ENCODE measurements at regions of chr10 and their contacts with region 1.

Region 1: GRCh38 chr10:124388823-124389612 is 29.7 kb downstream of the OAT start:
- DNase-seq: peak; percentile 82 to 93 (median 91)
- H3K4me3 ChIP-seq: peak overlapping the region in 2 of 4 donors; percentile 14 to 50
- H3K27ac ChIP-seq: peak overlapping the region in 1 of 5 donors; percentile 30
- H3K4me1 ChIP-seq: peaks cover 5 to 8% of the 10 kb centered on the region in 2 donors
- H3K27me3 ChIP-seq: no peaks in the 10 kb centered on the region
- CTCF ChIP-seq: peak; percentile 71 to 98 (median 88)
- POLR2A ChIP-seq: no peak

Region 2: DNA sequence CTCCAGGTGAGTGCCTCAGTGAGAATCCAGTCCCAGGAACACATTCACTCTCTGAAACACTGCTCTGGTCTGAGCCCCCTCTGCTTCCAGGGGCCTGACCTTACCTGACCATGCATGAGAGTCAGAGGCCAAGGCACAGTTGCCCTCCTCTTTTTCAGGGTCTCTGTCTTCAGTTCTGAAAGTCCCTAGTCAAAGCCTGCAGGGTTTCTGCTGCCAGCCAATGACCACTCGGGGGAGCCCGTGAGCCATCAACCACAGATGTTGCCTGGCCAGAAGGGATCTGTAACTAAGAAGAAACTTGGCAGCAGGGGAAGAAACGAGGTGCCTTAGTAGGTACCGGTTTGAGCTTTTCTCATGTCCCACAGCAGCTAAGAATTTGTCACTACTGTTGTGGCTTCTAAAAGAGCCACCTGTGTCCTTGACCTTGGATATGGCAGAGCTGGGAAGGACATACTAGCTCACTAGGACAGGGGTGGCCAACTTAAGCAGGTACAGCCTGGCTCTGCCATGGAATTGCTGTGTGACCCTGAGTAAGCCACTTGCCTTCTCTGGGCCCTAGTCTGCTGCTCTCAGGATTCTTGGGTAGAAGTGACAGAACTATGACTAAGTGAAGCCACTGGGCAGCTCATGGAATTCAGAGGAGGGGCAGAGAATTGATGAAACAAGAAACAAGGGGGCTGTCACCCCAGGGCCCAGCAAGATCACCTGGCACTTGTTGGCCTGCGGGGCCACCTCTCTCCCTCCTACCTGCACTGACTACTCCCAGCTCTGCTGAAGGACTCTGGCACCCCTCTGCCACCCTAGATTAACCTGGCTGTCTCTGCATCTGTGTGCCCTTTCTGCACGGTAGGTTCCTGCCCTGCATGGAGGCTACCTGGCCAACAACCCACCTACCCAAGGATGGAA is 806.7 kb before region 1 on chr10:
- intact Hi-C with region 1: loop called in 1 of 2 experiments (anchors 10 kb)
- DNase-seq: peak; percentile 75 to 91 (median 83)
- H3K4me3 ChIP-seq: no peak overlapping the region
- H3K27ac ChIP-seq: no peak overlapping the region
- H3K4me1 ChIP-seq: peaks cover 0 to 5% of the 10 kb centered on the region in 2 donors
- H3K27me3 ChIP-seq: peaks cover 22% of the 10 kb centered on the region
- CTCF ChIP-seq: peak; percentile 61 to 84 (median 75)
- POLR2A ChIP-seq: no peak

Region 3: DNA sequence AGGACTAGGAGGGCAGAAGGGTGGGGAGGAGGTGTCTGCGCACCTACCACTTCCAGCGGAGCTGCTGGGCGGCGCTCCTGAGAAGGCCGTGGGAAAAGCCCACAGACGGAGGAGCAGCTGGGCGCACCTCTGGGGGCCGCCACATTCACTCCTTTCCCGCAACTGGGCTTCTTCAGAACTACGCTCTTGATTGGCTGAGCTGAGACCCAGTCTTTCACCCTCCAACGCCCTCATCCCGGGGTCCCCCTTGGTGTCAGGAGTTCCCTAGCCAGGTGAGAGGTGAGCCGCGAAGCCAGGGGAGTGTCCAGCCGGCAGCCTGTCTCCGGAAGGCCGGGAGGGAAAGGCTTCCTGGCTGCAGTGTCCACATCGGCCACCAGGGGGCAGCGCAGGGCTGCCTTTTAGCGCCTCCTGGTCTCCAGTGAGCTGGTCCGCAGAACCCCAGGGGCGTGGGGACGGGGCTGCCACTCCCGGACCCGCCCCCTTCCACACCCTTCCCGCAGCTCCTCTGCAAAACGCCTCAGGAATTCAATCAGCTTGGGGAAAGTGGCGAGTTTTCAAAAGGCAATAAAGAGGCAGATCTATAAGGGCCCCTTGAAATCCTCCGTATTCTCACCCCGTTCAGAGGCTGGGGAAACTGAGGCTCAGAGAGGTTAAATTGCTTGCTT is 394.5 kb before region 1 on chr10:
- intact Hi-C with region 1: loop called (anchors 2 kb)
- DNase-seq: peak; percentile 76 to 93 (median 86)
- H3K4me3 ChIP-seq: peak overlapping the region in 1 of 4 donors; percentile 18
- H3K27ac ChIP-seq: peak overlapping the region in 1 of 5 donors; percentile 69
- H3K4me1 ChIP-seq: peaks cover 7 to 27% of the 10 kb centered on the region in 2 donors
- H3K27me3 ChIP-seq: peaks cover 45% of the 10 kb centered on the region
- CTCF ChIP-seq: peak; percentile 95 to 99 (median 99)
- POLR2A ChIP-seq: no peak

Region 4: DNA sequence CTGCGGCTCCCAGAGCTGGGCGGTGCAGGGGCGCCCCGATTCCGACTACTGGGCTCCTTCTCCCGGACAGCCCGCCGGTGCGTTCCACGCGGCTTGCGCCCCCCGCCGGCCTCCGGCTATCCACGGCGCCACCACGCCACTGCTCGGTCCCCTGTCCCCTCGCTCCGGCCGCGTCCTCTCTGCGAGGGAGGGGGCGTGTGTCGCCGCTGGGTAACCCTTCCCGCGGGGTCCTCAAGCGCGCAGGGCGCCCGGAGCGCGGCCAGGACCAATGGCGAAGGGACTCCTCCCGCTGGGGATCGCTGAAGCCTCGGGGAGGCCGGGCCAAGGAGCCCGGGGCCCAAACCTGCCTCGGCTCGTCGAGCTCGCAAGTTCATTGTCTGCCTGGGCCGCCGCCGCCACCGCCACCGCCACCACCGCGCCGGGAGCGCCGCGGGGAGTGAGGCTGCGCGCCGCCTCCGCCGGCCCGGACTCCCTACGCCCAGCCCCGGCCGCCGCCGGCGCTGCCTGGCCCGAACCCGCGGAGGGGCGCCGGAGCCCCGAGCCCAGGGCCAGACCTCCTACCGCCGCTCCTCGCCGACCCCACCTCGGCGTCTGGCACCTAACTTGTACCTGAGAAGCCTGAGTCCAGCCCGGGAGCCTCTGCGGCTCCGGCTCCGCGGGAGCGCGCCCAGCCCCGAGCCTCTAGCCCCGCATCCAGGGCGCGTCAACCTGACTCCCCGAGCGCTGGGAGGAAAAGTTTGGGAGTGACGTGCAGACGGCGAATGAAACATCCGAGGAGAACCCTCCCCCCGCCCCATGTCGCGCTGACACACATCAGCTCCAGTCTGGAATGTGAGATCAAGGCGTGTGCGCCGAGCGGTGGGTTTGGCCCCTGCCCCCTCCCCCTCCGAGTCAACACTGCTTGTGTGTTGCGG is 295.9 kb before region 1 on chr10 and contains the start of gene CHST15:
- intact Hi-C with region 1: loop called in 1 of 2 experiments (anchors 10 kb)
- DNase-seq: peak; percentile 35 to 74 (median 51)
- H3K4me3 ChIP-seq: peak within 1 kb of the TSS in 2 of 4 donors; percentile 40 to 81
- H3K27ac ChIP-seq: peak within 1 kb of the TSS; percentile 76 to 97 (median 80)
- H3K4me1 ChIP-seq: peaks cover 7 to 21% of the 10 kb centered on the region in 2 donors
- H3K27me3 ChIP-seq: no peaks in the 10 kb centered on the region
- CTCF ChIP-seq: no peak
- POLR2A ChIP-seq: peak; percentile 21 to 53
- total RNA-seq, gene CHST15: 9.0 to 54.5 (median 35.8) TPM

Region 5: GRCh38 chr10:124530215-124530665 is 141.2 kb after region 1 on chr10:
- intact Hi-C with region 1: no loop called
- DNase-seq: peak; percentile 89 to 93 (median 90)
- H3K4me3 ChIP-seq: no peak overlapping the region
- H3K27ac ChIP-seq: no peak overlapping the region
- H3K4me1 ChIP-seq: peaks cover 19 to 23% of the 10 kb centered on the region in 2 donors
- H3K27me3 ChIP-seq: no peaks in the 10 kb centered on the region
- CTCF ChIP-seq: peak; percentile 88 to 94 (median 91)
- POLR2A ChIP-seq: no peak